HEK293 (cell line): ENCODE measurements at regions of chr1 and their contacts with region 1.

Region 1: DNA sequence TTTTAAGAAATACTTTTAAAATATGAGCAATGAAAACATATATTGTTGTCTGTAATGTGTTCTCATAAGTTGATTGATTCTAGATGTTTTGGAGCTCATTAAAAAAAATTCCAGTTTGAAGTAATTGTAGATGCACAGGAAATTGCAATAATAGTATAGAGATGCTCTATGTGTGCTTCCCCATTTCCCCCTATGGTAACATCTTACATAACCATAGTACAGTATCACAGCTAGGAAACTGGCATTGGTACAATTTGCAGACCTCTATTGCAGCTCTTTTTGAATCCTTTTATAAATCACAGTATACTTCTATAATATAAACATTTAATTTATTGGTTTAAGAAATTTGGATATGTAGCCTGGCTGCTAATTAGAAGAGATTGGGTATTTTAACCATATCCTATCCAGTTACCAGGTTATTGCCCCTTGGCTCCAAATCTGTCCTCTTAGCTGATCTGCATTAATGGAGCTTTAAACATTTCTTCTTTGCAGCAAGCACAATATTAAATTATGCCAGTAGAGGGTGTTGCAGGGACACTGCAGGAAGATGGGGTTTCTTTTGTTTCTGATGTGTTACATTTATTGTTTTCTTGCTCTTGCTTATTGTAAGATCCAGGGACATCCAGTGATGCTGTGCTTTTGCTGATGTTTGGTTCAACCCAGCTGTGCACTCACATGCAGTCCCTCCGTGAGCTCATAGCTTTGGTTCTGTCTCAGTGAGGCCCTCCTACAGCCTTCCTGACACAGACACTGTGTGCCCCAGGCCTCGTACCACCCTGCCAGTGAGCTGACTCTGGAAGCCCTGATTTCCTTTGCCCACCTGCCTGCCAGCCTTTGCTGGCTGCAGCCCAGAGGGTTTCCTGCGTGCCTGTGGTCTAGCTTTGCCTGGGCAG is 103.3 kb downstream of the RABGAP1L start:
- H3K4me3 ChIP-seq: no peak overlapping the region
- H3K27ac ChIP-seq: no peak overlapping the region
- H3K4me1 ChIP-seq: no peaks in the 10 kb centered on the region
- CTCF ChIP-seq: peak; percentile 63; the same call in 1 of the 2 replicates

Region 2: DNA sequence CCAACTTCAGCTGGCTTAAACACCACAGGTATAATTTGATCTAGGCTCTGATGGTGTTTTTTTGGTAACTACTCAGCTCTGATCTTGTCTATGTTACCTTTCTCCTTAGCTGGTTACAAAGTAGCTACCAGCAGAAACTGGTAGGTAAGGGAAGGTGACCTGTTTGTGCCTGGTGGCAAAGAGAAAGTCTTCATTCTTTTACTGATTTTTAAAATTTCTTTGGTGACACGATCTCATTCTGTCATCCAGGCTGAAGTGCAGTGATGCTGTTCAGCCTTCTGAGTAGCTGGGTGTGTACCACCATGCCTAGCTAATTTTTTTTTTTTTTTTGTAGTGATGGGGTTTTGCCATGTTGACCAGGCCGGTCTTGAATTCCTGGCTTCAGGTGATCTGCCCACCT is 40.9 kb before region 1 on chr1:
- CTCF ChIA-PET with region 1: no interaction called
- POLR2A ChIA-PET with region 1: no interaction called
- H3K4me3 ChIP-seq: no peak overlapping the region
- H3K27ac ChIP-seq: no peak overlapping the region
- H3K4me1 ChIP-seq: peaks cover 3% of the 10 kb centered on the region; the same call in 1 of the 2 replicates
- CTCF ChIP-seq: no peak

Region 3: GRCh38 chr1:174232761-174233160 is 29.8 kb before region 1 on chr1:
- CTCF ChIA-PET with region 1: no interaction called
- POLR2A ChIA-PET with region 1: no interaction called
- H3K4me3 ChIP-seq: no peak overlapping the region
- H3K27ac ChIP-seq: no peak overlapping the region
- H3K4me1 ChIP-seq: no peaks in the 10 kb centered on the region
- CTCF ChIP-seq: no peak

Region 4: DNA sequence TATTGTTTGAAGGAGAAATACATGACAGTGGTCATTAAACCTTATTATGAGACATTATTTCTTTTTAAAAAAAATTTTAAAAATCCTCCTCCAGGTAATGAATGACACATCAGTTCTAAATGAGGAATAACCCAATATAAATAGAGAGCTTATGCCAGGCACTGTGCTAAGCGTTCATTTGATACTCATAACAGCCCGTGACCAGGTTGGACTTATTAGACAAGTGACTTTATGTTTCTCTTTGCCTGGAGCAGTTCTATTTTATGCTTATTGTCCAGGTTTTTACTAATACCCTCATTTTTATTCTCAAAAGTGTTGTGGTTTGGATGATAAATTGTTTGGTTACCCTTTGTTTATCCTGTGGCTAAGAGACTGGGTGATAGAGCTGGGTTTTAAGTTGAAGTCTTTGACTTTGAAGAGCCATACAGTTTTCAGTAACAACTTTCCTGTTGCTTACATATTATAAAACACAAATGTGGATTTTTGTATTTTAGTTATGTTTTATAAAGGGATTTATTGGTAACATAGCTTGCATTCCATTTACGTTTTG is 19.1 kb before region 1 on chr1:
- CTCF ChIA-PET with region 1: interaction called, 11 read pairs
- POLR2A ChIA-PET with region 1: no interaction called
- H3K4me3 ChIP-seq: no peak overlapping the region
- H3K27ac ChIP-seq: no peak overlapping the region
- H3K4me1 ChIP-seq: no peaks in the 10 kb centered on the region
- CTCF ChIP-seq: no peak

Region 5: GRCh38 chr1:174276087-174276486 is 13.5 kb after region 1 on chr1:
- CTCF ChIA-PET with region 1: interaction called, 21 read pairs
- POLR2A ChIA-PET with region 1: no interaction called
- H3K4me3 ChIP-seq: no peak overlapping the region
- H3K27ac ChIP-seq: no peak overlapping the region
- H3K4me1 ChIP-seq: peaks cover 3% of the 10 kb centered on the region; the same call in 1 of the 2 replicates
- CTCF ChIP-seq: no peak

Region 6: DNA sequence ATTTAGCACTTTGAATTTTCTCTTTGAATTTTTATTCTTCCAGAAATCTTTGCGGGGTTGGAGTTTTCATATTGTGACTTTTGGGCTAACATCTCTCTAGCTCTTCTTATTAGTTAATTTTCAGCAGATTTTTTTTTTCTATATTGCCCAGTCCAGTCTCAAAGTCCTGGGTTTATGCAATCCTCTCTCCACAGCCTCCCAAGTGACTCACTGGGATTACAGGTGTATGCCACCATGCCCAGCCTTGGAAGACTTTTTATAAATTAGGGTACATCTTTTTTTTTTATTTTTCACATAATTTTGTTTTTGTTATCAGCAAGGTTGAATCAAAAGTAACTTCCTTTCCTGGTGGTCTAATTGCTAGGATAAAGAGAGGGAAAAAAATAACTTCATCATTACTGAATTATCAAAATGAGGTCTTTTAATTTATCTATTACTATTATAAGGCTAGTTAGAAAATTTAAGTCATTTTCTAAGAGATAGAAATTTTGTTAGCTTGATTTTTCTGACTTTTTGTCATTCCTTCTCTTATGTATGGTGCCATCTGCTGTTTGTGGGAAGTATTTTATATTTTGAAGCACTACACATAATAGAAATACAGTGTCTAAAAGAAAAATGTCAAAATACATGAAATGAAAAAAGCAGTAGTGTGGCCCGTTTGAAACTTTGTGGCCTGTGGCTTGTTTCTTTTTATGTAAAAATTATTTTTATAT is 463.7 kb after region 1 on chr1:
- CTCF ChIA-PET with region 1: interaction called, 58 read pairs
- POLR2A ChIA-PET with region 1: no interaction called
- H3K4me3 ChIP-seq: no peak overlapping the region
- H3K27ac ChIP-seq: no peak overlapping the region
- H3K4me1 ChIP-seq: no peaks in the 10 kb centered on the region
- CTCF ChIP-seq: no peak

Region 7: GRCh38 chr1:174743654-174744561 is 481.3 kb after region 1 on chr1:
- CTCF ChIA-PET with region 1: interaction called, 76 read pairs
- POLR2A ChIA-PET with region 1: no interaction called
- H3K4me3 ChIP-seq: no peak overlapping the region
- H3K27ac ChIP-seq: no peak overlapping the region
- H3K4me1 ChIP-seq: no peaks in the 10 kb centered on the region
- CTCF ChIP-seq: peak; percentile 32; the same call in 1 of the 2 replicates